K562 (cell line): ENCODE measurements at regions of chrX and their contacts with region 1.

Region 1: GRCh38 chrX:154097597-154098541 is at the start of gene MECP2:
- DNase-seq: peak; percentile 91 to 98 (median 94)
- ATAC-seq: peak; percentile 82
- H3K4me3 ChIP-seq: peak within 1 kb of the TSS; percentile 87
- H3K27ac ChIP-seq: peak within 1 kb of the TSS; percentile 93
- H3K4me1 ChIP-seq: peaks cover 14 to 26% of the 10 kb centered on the region in 2 experiments
- H3K27me3 ChIP-seq: no peaks in the 10 kb centered on the region
- CTCF ChIP-seq: no peak
- EP300 ChIP-seq: no peak
- POLR2A ChIP-seq: no peak; the same call in 1 of the 2 replicates
- RAD21 ChIP-seq: no peak
- polyA plus RNA-seq, gene MECP2: 2.1 to 2.3 TPM

Region 2: DNA sequence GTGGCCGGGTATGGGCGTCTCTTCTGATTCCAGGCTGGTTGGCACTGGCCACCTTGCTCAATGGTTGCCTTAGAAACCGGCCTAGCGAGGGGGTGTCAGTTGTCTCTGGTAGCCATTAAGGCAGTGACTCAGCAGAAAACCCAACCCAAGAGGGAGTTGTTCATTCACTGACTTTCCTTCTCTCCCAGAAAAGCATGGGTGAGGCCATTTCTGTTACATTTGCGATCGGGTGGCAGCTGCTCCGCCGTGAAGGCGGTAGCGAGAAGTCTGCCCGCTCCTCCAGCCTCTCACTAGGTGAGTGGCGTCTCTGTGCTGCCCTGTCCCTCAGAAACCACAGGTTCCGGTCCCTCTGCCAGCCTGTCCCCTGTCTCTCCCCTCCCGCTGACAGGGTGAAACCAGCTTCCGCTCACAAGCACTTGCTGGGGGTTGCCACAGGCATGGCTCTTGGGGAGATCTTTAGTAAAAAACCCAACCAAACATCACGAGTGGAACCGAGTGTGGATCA is 95.6 kb before region 1 on chrX:
- CTCF ChIA-PET with region 1: no interaction called
- POLR2A ChIA-PET with region 1: no interaction called
- in situ Hi-C with region 1: no loop called
- intact Hi-C with region 1: no loop called
- DNase-seq: peak; percentile 42 to 89 (median 66)
- ATAC-seq: peak; percentile 92
- H3K4me3 ChIP-seq: no peak overlapping the region
- H3K27ac ChIP-seq: peak overlapping the region; percentile 97
- H3K4me1 ChIP-seq: peaks cover 12 to 18% of the 10 kb centered on the region in 2 experiments; a peak in 4 of 5 replicates
- H3K27me3 ChIP-seq: no peaks in the 10 kb centered on the region
- CTCF ChIP-seq: no peak
- EP300 ChIP-seq: no peak
- POLR2A ChIP-seq: peak; percentile 60
- RAD21 ChIP-seq: no peak

Region 3: DNA sequence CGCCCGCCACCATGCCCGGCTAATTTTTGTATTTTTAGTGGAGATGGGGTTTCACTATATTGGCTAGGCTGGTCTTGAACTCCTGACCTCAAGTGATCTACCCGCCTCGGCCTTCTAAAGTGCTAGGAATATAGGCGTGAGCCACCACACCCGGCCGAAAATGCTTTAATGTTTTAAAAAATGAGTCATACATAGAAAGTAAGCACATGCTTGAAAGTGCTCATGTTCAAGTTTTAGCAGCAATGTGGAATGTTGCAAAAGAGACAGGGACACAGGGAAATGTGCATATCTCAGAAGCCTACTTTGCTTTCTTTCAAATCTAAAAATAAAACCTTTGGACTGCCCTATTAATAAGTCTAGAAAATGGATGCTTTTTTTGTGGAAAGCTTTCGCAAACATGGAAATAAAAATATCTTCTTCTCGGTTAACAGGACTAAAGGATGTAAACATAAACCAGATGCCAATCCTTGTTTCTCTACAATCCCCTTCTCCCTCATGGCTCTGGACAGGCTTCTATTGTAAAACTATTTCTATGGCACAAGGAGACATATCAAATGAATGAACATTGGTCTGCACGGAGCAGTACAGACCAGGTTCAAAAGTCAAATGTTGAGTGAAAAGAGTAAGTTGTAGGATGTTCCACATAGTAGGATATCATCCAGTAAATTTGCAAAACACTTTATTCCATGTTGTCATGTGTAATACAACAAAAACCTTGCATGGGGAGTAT is 15.3 kb before region 1 on chrX:
- CTCF ChIA-PET with region 1: no interaction called
- POLR2A ChIA-PET with region 1: interaction called, 11 read pairs
- in situ Hi-C with region 1: no loop called
- intact Hi-C with region 1: no loop called
- DNase-seq: peak in 2 of 4 experiments; percentile 4 to 35
- ATAC-seq: peak; percentile 52
- H3K4me3 ChIP-seq: no peak overlapping the region
- H3K27ac ChIP-seq: peak overlapping the region; percentile 66; the same call in 1 of the 3 replicates
- H3K4me1 ChIP-seq: peaks cover 8 to 12% of the 10 kb centered on the region in 2 experiments; a peak in 4 of 5 replicates
- H3K27me3 ChIP-seq: no peaks in the 10 kb centered on the region
- CTCF ChIP-seq: no peak
- EP300 ChIP-seq: no peak
- POLR2A ChIP-seq: no peak
- RAD21 ChIP-seq: no peak

Region 4: DNA sequence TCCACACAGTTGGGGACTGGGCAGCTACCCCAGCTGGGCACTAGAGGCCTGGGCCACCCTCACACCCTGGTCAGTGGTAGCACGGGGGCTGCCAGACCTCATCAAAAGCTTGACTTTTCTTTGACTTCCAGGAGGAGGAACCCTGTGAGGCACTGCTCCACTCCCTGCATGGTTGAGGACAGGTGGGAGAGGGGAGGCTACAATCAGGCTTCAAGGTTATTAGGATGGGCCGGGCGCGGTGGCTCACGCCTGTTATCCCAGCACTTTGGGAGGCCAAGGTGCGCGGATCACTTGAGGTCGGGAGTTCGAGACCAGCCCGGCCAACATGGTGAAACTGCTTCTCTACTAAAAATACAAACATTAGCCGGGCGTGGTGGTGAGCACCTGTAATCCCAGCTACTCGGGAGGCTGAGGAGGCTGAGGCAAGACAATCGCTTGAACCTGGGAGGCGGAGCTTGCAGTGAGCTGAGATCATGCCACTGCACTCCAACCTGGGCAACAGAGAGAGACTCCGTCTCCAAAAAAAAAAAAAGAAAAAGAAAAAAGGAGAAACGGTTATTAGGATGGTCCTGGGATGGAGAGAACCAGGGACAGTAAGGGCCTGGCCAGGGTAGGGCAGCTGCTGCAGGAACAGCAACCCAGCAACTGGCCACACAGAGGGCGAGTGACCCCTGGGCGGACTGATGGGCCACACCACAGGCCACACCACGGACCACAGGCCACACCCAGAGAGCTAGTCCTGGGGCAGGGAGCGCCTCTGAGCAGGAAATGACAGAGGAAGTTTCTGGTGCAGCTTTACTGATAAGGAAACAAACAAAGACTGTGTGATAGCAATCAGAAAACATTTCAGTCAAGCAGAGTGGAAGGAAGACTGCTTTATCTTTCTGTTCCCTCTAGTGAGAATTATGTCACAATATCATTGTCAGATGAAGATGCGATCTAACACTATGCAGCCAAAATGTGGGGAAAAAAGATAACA is 25.7 kb after region 1 on chrX:
- CTCF ChIA-PET with region 1: no interaction called
- POLR2A ChIA-PET with region 1: interaction called, 4 read pairs
- in situ Hi-C with region 1: no loop called
- intact Hi-C with region 1: loop called (anchors 2 kb)
- DNase-seq: peak; percentile 71 to 87 (median 76)
- ATAC-seq: peak; percentile 96
- H3K4me3 ChIP-seq: no peak overlapping the region
- H3K27ac ChIP-seq: peak overlapping the region; percentile 50; the same call in 2 of the 3 replicates
- H3K4me1 ChIP-seq: peaks cover 29% of the 10 kb centered on the region in 2 experiments; a peak in 4 of 5 replicates
- H3K27me3 ChIP-seq: no peaks in the 10 kb centered on the region
- CTCF ChIP-seq: no peak
- EP300 ChIP-seq: peak; percentile 94
- POLR2A ChIP-seq: no peak; the same call in 1 of the 2 replicates
- RAD21 ChIP-seq: no peak